ENCODE measurements at regions of chr11 and their contacts with region 1.

Region 1: GRCh38 chr11:35617687-35618496 is at the start of gene FJX1:
- DNase-seq: peak; percentile 98
- H3K4me3 ChIP-seq: peak within 1 kb of the TSS; percentile 56
- H3K27ac ChIP-seq: peak within 1 kb of the TSS; percentile 72
- H3K4me1 ChIP-seq: peaks cover 54% of the 10 kb centered on the region
- H3K27me3 ChIP-seq: peaks cover 7% of the 10 kb centered on the region
- CTCF ChIP-seq: no peak
- total RNA-seq, gene FJX1: 40.4 and 50.1 TPM in 2 replicates

Region 2: GRCh38 chr11:35111161-35112055 is 506.5 kb before region 1 on chr11:
- CTCF ChIA-PET with region 1: no interaction called
- POLR2A ChIA-PET with region 1: no interaction called
- intact Hi-C with region 1: no loop called
- DNase-seq: no peak
- H3K4me3 ChIP-seq: no peak overlapping the region
- H3K27ac ChIP-seq: no peak overlapping the region
- H3K4me1 ChIP-seq: no peaks in the 10 kb centered on the region
- H3K27me3 ChIP-seq: peaks cover 53% of the 10 kb centered on the region
- CTCF ChIP-seq: no peak

Region 3: GRCh38 chr11:35485656-35486322 is 132.1 kb before region 1 on chr11:
- CTCF ChIA-PET with region 1: interaction called, 4 read pairs
- POLR2A ChIA-PET with region 1: no interaction called
- intact Hi-C with region 1: loop called (anchors 2 kb)
- DNase-seq: peak; percentile 97
- H3K4me3 ChIP-seq: no peak overlapping the region
- H3K27ac ChIP-seq: no peak overlapping the region
- H3K4me1 ChIP-seq: no peaks in the 10 kb centered on the region
- H3K27me3 ChIP-seq: peaks cover 20% of the 10 kb centered on the region
- CTCF ChIP-seq: peak; percentile 100

Region 4: DNA sequence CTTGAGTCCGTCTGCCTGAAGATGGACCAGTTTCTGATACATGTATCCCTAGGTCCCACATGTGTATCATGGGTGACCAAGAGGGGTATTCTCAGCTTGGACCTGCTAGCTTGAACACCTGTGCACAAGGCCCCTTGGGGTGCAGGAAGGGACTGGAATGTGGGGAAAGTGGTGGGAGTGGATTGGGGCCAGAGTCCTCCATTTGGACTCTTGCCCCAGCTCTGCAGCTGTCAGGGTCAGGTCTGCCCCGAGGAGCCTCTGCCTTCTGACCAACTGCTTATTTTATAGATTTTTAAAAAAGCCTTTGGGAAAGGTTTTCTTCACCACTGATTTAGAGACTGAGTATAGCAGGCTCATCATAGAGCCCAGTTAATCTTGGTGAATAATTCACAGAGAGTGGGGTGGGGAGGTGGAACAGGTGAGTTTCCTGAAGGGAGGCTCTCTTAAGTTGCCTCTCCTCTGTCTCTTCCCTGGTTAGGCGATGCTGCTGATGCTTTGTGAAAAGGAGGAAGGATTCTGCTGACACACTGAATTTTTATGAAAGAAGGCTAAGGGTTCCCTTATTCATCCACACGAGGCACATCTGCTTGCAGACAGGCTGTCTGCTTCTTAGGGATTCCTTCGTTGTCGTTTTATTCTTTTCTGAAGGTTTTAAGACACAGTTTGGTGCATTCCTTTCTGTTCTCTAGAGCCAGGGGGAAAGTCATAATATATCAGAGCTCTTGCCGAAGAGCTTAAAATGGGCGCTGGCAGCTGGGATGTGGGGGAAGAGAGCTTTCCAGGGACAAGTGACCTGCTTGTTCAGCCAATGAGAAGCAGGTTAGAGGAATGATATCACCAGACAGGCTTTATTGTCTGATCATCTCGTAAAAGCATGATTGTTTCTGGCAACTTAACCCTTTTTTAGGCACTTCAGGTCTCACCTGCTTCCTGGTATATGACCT is 64.6 kb after region 1 on chr11:
- CTCF ChIA-PET with region 1: interaction called, 10 read pairs
- POLR2A ChIA-PET with region 1: no interaction called
- intact Hi-C with region 1: no loop called
- DNase-seq: peak; percentile 79
- H3K4me3 ChIP-seq: no peak overlapping the region
- H3K27ac ChIP-seq: peak overlapping the region; percentile 8
- H3K4me1 ChIP-seq: peaks cover 17% of the 10 kb centered on the region
- H3K27me3 ChIP-seq: no peaks in the 10 kb centered on the region
- CTCF ChIP-seq: no peak

Region 5: GRCh38 chr11:36056160-36056751 is 438.4 kb after region 1 on chr11:
- CTCF ChIA-PET with region 1: interaction called, 3 read pairs
- POLR2A ChIA-PET with region 1: no interaction called
- intact Hi-C with region 1: loop called (anchors 2 kb)
- DNase-seq: peak; percentile 87
- H3K4me3 ChIP-seq: no peak overlapping the region
- H3K27ac ChIP-seq: no peak overlapping the region
- H3K4me1 ChIP-seq: peaks cover 4% of the 10 kb centered on the region
- H3K27me3 ChIP-seq: no peaks in the 10 kb centered on the region
- CTCF ChIP-seq: peak; percentile 100

Region 6: GRCh38 chr11:36149538-36150242 is 531.8 kb after region 1 on chr11:
- CTCF ChIA-PET with region 1: no interaction called
- POLR2A ChIA-PET with region 1: no interaction called
- intact Hi-C with region 1: loop called (anchors 5 kb)
- DNase-seq: peak; percentile 97
- H3K4me3 ChIP-seq: no peak overlapping the region
- H3K27ac ChIP-seq: no peak overlapping the region
- H3K4me1 ChIP-seq: peaks cover 10% of the 10 kb centered on the region
- H3K27me3 ChIP-seq: no peaks in the 10 kb centered on the region
- CTCF ChIP-seq: peak; percentile 76

Region 7: DNA sequence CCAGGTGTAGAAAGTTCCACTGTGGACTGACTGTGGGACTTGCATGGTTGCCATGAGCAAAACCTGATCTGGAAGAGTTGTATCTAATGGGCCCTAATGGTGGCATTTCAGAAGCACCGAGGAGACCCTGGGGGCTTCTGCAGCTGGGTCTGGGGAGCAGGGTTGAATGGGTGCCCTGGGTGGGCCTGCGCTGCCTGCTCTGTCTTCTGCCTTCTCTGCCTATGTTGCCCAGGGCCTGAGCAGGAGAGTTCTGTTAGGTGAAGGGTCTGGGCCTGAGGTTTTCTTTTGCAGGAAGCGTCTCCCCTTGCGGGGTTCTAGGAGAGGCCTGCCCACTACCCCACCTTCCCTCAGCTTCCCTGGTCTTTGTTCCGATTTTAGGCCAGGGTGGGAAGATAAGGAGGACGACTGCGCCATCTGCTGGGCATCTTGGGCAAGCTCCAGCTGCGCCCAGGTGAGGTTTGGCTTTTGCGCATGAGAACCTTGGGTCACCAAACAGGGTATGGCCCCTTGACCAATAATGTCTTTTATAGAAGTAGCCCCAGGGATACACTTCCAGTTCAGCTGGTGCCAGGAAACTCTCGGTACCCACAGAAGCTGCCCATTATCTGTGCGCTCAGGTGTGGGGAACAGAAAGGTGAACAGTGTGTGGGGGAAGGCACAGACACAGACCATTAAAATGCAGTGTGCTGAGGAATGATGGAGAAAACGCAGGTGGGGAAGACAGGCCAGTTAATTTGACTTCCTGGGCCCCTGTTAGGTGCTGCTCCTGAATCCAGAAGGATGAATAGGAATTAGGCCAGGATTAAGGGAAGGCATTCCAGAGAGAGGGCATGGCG is 648.1 kb after region 1 on chr11:
- CTCF ChIA-PET with region 1: interaction called, 3 read pairs
- POLR2A ChIA-PET with region 1: no interaction called
- intact Hi-C with region 1: loop called (anchors 2 kb)
- DNase-seq: peak; percentile 87
- H3K4me3 ChIP-seq: no peak overlapping the region
- H3K27ac ChIP-seq: no peak overlapping the region
- H3K4me1 ChIP-seq: no peaks in the 10 kb centered on the region
- H3K27me3 ChIP-seq: peaks cover 2% of the 10 kb centered on the region
- CTCF ChIP-seq: peak; percentile 100

Region 8: DNA sequence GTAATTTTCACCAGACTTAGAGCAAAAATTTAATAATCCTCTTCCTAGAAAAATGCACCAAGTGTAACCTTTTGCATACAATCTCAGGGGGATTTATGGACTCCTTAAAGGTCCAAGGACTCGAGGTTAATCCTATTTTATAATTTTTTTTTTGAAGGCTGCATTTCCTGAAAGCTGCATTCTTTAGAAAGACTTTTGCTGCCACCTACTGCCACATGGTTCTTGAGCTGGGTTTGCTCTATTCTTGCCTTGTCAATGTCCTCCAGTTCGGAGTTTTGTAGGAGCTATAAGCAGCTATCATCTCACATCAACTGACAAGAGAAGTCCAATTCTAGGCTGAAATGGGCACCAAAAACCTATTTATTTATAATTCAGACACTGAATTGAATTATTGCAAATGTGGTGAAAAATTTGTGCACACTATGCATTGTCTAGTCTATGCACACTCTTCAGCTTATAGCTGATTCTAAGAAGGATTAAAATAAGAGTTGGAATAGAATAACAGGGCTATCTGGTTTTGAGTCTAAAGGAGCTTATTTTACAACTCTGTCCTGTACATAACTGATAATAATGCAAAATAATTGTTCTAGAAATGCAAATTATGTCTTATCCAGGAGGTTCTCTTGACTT is 860.9 kb after region 1 on chr11:
- CTCF ChIA-PET with region 1: no interaction called
- POLR2A ChIA-PET with region 1: no interaction called
- intact Hi-C with region 1: loop called (anchors 2 kb)
- DNase-seq: peak; percentile 93
- H3K4me3 ChIP-seq: no peak overlapping the region
- H3K27ac ChIP-seq: no peak overlapping the region
- H3K4me1 ChIP-seq: peaks cover 14% of the 10 kb centered on the region
- H3K27me3 ChIP-seq: no peaks in the 10 kb centered on the region
- CTCF ChIP-seq: peak; percentile 98